CD8-positive, alpha-beta T cell (primary cell): ENCODE measurements at regions of chr5 and their contacts with region 1.

Region 1: GRCh38 chr5:77775790-77776553 is at the start of gene TBCA:
- DNase-seq: peak; percentile 84 to 97 (median 93)
- ATAC-seq: peak; percentile 80
- H3K4me3 ChIP-seq: peak within 1 kb of the TSS; percentile 65 to 80
- H3K4me3 Mint-ChIP-seq: peak within 1 kb of the TSS; percentile 88
- H3K27ac ChIP-seq: peak within 1 kb of the TSS; percentile 91 to 96
- H3K27ac Mint-ChIP-seq: peak within 1 kb of the TSS; percentile 98
- H3K4me1 ChIP-seq: peaks cover 41% of the 10 kb centered on the region
- H3K4me1 Mint-ChIP-seq: peaks cover 51% of the 10 kb centered on the region
- H3K27me3 ChIP-seq: no peaks in the 10 kb centered on the region
- H3K27me3 Mint-ChIP-seq: no peaks in the 10 kb centered on the region
- CTCF ChIP-seq: no peak
- total RNA-seq, gene TBCA: 72.2 to 74.6 TPM

Region 2: DNA sequence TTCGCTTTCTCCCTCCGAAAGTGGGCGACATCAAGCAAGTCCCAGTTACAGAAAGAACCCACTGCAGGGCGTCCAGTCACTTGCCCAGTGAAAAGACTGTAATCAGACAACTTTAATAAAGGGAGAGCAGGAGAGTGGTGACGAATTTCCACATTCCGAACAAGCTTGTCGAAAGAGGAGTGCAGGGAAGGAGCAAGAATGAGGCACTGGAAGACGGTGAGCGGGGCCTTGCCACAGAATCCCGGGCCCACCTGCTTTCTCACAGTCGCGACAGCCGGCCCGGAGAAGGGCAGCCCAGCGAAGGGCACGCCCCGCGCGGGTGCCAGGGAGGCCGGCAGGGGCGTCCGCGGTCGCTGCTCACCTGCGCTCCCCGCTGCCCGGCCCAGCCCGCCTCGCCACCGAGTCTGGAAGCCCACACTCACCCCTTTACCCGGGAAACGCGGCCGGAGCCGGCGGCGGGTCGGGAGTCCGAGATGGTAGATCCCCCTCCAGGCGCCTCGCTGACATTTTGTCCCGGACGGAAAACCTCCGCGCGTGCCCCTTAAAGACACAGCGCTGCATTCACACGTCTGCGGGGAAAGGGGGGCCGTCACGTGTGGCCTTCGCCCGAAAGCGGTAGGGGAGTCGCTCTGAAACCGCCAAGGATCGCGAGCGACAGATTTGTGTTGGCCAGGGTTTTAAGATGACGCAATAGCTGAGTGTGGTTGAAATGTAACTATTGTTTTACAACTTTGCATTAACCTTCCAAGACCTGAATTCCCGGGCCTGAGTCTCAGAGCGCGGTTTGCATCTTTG is 689.1 kb before region 1 on chr5 and contains the start of gene ZBED3:
- CTCF ChIA-PET with region 1: no interaction called
- POLR2A ChIA-PET with region 1: no interaction called
- intact Hi-C with region 1: loop called in 1 of 2 experiments (anchors 5 kb)
- DNase-seq: peak; percentile 29 to 87 (median 68)
- ATAC-seq: peak; percentile 87
- H3K4me3 ChIP-seq: peak within 1 kb of the TSS; percentile 74
- H3K4me3 Mint-ChIP-seq: peak within 1 kb of the TSS; percentile 92
- H3K27ac ChIP-seq: peak within 1 kb of the TSS; percentile 34 to 57
- H3K27ac Mint-ChIP-seq: peak within 1 kb of the TSS; percentile 84
- H3K4me1 ChIP-seq: peaks cover 16% of the 10 kb centered on the region
- H3K4me1 Mint-ChIP-seq: peaks cover 25% of the 10 kb centered on the region
- H3K27me3 ChIP-seq: no peaks in the 10 kb centered on the region
- H3K27me3 Mint-ChIP-seq: peaks cover 2% of the 10 kb centered on the region
- CTCF ChIP-seq: peak; percentile 31
- total RNA-seq, gene ZBED3: 11.6 to 12.3 TPM

Region 3: DNA sequence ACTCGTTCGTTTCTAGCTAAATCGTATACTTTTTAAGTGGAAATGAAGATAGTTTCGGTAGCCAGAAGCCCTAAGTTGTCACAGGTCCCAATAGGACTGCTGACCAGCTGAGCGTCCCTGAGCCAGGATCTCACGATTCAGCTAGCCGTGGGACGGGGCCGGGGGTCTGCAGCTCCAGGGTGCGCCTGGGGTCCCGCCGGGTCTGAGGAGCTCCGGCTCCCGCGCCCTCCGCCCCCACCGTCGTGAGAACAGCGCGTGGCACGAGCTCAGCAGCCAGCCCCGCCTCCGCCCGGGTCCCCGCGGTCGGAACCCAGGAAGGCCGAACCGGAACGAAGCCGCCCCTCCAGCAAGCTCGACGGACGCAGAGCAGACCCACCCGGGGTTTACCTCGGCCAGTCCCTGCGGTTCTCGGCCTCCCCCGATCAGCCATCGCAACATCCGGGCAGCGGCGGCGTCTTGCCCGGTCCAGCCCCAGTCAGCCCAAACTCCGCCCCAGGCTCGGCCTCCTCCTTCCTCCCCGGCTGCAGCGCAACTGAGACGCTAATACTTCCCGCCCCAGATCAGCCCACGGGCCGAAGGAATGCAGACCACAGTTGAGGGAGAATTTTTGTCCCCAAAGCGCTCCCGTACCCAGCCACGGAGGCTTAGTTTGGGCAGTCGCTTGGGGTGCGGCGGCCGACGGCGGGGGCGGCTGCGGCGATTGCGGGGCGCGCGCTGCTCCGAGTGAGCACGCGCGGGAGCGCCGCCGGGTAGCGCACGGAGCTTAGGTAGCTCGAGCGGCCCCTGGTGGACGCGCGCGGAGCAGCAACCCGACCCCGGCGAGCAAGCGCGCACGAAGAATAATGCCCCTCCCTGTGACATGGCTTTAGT is 284.0 kb before region 1 on chr5 and contains the start of gene WDR41:
- CTCF ChIA-PET with region 1: no interaction called
- POLR2A ChIA-PET with region 1: no interaction called
- intact Hi-C with region 1: loop called (anchors 1 to 5 kb)
- DNase-seq: peak; percentile 74 to 92 (median 85)
- ATAC-seq: peak; percentile 94
- H3K4me3 ChIP-seq: peak within 1 kb of the TSS; percentile 79 to 87
- H3K4me3 Mint-ChIP-seq: peak within 1 kb of the TSS; percentile 87
- H3K27ac ChIP-seq: peak within 1 kb of the TSS; percentile 79 to 85
- H3K27ac Mint-ChIP-seq: peak within 1 kb of the TSS; percentile 91
- H3K4me1 ChIP-seq: peaks cover 5% of the 10 kb centered on the region
- H3K4me1 Mint-ChIP-seq: peaks cover 13% of the 10 kb centered on the region
- H3K27me3 ChIP-seq: no peaks in the 10 kb centered on the region
- H3K27me3 Mint-ChIP-seq: peaks cover 8% of the 10 kb centered on the region
- CTCF ChIP-seq: peak; percentile 86
- total RNA-seq, gene WDR41: 4.7 to 5.3 TPM

Region 4: DNA sequence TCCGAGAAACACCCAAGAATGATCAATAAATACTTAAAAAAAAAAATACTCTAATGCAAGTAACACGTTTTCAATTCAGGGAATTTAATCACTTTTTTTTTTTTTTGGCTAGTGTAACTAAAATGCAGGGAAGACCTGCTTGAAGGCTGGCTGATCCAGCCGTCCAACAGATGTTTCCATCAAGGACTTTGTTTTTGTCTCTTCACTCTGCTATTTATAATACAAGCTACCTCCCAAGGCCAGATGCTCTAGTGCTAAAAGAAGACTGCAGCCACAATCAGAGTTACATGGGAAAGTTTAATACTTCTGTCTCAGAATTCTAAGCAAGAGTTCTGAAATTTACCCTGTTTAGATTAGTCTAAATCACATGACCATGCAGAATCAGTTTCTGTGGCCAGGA is 14.4 kb before region 1 on chr5:
- CTCF ChIA-PET with region 1: no interaction called
- POLR2A ChIA-PET with region 1: no interaction called
- intact Hi-C with region 1: no loop called
- DNase-seq: no peak
- ATAC-seq: no peak
- H3K4me3 ChIP-seq: no peak overlapping the region
- H3K4me3 Mint-ChIP-seq: no peak overlapping the region
- H3K27ac ChIP-seq: no peak overlapping the region
- H3K27ac Mint-ChIP-seq: no peak overlapping the region
- H3K4me1 ChIP-seq: peaks cover 13% of the 10 kb centered on the region
- H3K4me1 Mint-ChIP-seq: peaks cover 48% of the 10 kb centered on the region
- H3K27me3 ChIP-seq: no peaks in the 10 kb centered on the region
- H3K27me3 Mint-ChIP-seq: no peaks in the 10 kb centered on the region
- CTCF ChIP-seq: no peak

Region 5: GRCh38 chr5:77851176-77852067 is 75.5 kb after region 1 on chr5:
- CTCF ChIA-PET with region 1: no interaction called
- POLR2A ChIA-PET with region 1: no interaction called
- intact Hi-C with region 1: no loop called
- DNase-seq: peak in 2 of 9 experiments; percentile 24 to 25
- ATAC-seq: no peak
- H3K4me3 ChIP-seq: peak overlapping the region; percentile 45 to 64
- H3K4me3 Mint-ChIP-seq: peak overlapping the region; percentile 76
- H3K27ac ChIP-seq: no peak overlapping the region
- H3K27ac Mint-ChIP-seq: no peak overlapping the region
- H3K4me1 ChIP-seq: peaks cover 6% of the 10 kb centered on the region
- H3K4me1 Mint-ChIP-seq: peaks cover 21% of the 10 kb centered on the region
- H3K27me3 ChIP-seq: no peaks in the 10 kb centered on the region
- H3K27me3 Mint-ChIP-seq: peaks cover 48% of the 10 kb centered on the region
- CTCF ChIP-seq: no peak

Region 6: DNA sequence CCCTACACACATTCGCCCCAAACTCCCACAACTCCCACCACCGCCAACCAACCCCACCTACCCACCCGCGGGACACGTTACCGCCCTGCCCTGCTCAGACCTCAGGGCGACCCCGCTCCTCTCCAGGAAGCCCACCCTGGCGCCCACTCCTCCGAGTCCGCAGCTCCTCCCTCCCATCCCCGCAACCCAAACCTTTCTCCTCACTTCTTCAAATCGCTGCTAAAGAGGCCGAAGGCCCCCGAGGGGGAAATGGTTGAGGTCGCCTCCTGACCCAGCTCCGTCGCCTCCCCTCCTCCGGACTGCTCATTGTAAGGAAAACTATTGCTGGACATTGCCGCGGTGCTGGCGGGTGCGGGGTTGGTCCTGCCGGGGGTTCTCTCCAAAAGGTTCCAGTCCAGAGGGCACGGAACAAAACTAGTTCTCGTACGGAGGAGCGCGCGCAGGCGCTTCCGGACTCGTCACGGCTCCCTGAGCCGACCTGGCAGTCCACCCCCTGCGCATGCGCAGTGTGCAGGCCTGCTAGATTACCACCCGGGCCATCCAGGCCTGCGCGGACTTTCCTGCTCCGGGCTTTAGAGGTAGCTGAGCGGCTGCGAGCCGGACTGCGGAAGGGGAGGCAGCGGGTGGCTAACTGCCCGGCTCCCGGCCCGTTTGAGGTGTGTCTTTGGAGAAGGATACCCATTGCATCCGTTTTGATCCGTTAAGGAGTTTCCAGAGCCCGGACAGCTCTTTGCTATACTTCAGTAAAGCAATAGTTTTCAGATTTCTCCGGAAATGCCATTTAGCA is 518.5 kb after region 1 on chr5 and contains the start of gene AP3B1:
- CTCF ChIA-PET with region 1: no interaction called
- POLR2A ChIA-PET with region 1: no interaction called
- intact Hi-C with region 1: loop called (anchors 2 kb)
- DNase-seq: peak; percentile 92 to 99 (median 98)
- ATAC-seq: peak; percentile 90
- H3K4me3 ChIP-seq: peak within 1 kb of the TSS; percentile 70 to 99
- H3K4me3 Mint-ChIP-seq: peak within 1 kb of the TSS; percentile 99
- H3K27ac ChIP-seq: peak within 1 kb of the TSS; percentile 88 to 90
- H3K27ac Mint-ChIP-seq: peak within 1 kb of the TSS; percentile 98
- H3K4me1 ChIP-seq: peaks cover 30% of the 10 kb centered on the region
- H3K4me1 Mint-ChIP-seq: peaks cover 39% of the 10 kb centered on the region
- H3K27me3 ChIP-seq: peaks cover 0 to 2% of the 10 kb centered on the region in 2 experiments
- H3K27me3 Mint-ChIP-seq: no peaks in the 10 kb centered on the region
- CTCF ChIP-seq: no peak
- total RNA-seq, gene AP3B1: 24.8 to 25.0 TPM

Region 7: GRCh38 chr5:78984439-78985115 is 1208.6 kb after region 1 on chr5:
- CTCF ChIA-PET with region 1: no interaction called
- POLR2A ChIA-PET with region 1: no interaction called
- intact Hi-C with region 1: loop called in 1 of 2 experiments (anchors 5 kb)
- DNase-seq: peak; percentile 55 to 90 (median 75)
- ATAC-seq: peak; percentile 74
- H3K4me3 ChIP-seq: peak overlapping the region; percentile 54 to 68
- H3K4me3 Mint-ChIP-seq: peak overlapping the region; percentile 94
- H3K27ac ChIP-seq: peak overlapping the region; percentile 40 to 75
- H3K27ac Mint-ChIP-seq: peak overlapping the region; percentile 92
- H3K4me1 ChIP-seq: peaks cover 14% of the 10 kb centered on the region
- H3K4me1 Mint-ChIP-seq: peaks cover 28% of the 10 kb centered on the region
- H3K27me3 ChIP-seq: no peaks in the 10 kb centered on the region
- H3K27me3 Mint-ChIP-seq: no peaks in the 10 kb centered on the region
- CTCF ChIP-seq: no peak

Region 8: DNA sequence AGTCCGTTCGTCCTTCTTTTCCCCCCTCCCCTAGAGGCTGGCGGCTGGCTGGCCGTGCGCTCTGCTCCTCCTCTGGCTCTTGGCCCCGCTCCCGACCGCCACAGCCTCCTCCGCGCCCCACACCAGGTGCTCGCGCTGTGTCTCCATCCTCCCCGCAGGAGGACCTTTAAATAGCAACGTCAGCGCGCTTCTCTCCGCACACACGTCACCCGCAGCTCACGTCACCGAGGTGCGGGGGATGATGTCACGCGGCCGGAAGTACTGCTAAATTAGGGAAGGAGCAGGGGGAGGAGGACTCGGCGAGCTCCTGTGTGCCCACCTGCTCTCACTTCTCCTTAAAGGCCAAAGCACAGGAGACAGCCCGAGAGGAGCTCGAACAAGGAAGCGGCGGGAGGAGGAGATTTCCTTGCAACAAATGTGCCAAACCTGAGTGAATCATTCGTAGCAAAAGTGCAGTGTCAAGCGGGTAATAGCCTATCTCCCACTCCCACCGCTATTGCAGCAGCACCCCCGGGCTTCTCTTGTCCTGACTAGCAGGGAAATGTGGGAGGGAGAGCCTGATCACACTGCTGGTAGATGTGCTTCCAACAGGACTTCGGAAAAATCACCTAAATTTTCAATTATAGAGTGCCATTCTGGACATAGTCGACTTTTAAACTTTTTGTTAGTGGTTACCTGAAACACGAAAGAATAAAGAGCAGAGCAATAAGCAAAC is 1738.6 kb after region 1 on chr5:
- CTCF ChIA-PET with region 1: no interaction called
- POLR2A ChIA-PET with region 1: no interaction called
- intact Hi-C with region 1: loop called (anchors 2 to 5 kb)
- DNase-seq: peak; percentile 80 to 98 (median 92)
- ATAC-seq: peak; percentile 84
- H3K4me3 ChIP-seq: peak overlapping the region; percentile 62 to 73
- H3K4me3 Mint-ChIP-seq: peak overlapping the region; percentile 99
- H3K27ac ChIP-seq: peak overlapping the region; percentile 91 to 97
- H3K27ac Mint-ChIP-seq: peak overlapping the region; percentile 99
- H3K4me1 ChIP-seq: peaks cover 19% of the 10 kb centered on the region
- H3K4me1 Mint-ChIP-seq: peaks cover 42% of the 10 kb centered on the region
- H3K27me3 ChIP-seq: peaks cover 6 to 7% of the 10 kb centered on the region in 2 experiments
- H3K27me3 Mint-ChIP-seq: peaks cover 5% of the 10 kb centered on the region
- CTCF ChIP-seq: peak; percentile 13